Posterior vena cava (tissue), 2 donors: ENCODE measurements at regions of chr3 and their contacts with region 1.

Region 1: DNA sequence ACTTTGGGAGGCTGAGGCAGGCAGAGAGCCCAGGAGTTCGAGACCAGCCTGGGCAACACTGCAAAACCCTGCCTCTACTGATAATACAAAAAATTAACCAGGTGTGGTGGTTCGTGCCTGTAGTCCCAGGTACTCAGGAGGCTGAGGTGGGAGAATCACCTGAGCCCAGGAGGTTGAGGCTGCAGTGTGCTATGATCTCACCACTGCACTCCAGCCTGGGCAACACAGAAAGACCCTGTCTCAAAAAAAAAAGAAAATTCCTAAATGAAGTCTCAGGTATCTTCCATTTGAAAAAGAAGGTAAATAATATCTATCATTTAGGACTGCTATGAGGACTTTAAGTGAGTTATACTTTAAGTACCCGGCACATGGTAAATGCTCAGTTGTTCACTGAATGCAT is 2.9 kb downstream of the SMARCC1 start:
- DNase-seq: no peak

Region 2: DNA sequence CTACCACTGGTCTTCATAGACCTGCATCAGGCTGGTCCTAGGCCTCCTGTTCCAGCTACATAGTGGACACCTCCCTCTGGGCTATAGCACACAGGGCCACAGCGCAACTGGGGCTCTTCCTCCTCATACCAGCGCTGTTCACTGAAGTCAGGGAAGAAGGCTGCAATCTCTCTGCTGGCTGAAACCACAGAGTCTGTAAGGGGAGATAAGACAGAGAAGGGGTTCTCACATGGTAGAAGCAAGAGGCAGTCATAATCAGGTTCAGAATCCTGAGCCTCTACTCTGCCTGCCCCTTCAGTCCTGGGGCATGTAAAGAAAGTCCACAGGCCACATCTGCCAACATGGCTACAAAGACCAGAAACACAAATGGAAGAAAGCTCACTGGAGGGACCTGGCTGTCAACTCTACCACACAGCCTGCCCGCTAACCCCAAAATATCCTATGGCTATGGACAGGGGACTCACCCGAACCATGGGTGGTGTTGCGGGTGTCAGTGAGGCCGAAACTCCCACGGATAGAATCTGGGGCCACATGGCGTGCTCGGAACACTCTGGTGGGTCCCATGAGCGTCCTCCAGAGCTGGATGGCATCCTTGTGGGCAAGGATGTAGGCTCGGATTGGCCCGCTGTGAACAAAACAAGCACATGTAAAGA is 516.0 kb after region 1 on chr3:
- intact Hi-C with region 1: no loop called
- DNase-seq: no peak

Region 3: DNA sequence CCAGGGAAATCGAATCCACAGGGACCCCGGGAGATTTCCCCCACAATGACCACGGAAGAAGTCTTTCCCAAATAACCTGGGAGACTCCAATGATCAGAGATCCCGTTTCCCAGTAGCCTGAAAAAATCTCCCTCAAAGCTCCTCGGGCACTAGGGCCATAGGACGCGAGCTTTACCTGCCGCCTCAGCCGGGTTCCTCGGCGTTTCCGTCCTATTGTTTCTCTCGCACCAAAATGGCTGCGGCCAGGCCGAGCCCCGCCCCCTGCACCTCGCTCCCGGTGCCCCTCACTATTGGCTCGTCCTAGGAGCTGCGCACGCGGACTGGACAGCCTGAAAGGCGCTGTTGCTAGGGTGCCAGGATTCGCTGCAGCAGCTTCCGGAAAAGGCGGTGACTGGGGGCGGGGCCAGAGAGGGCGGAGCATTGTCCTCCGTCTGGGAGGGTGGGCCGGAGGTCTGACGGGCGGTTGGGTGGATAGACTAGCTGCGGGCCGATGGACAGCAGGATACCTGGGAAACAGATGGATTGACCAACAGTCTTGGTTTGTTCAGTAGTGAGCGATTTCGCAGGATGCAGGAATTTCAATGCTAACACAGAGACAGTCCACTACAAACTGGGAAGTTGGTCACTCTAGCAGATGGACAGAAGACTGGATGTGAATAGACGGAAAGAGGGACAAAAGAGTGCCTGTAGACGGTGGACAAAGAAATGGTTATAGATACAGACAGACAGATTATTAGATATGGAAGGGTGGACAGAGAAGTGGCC is 938.4 kb after region 1 on chr3 and contains the start of gene IP6K2:
- intact Hi-C with region 1: loop called in 1 of 2 experiments (anchors 5 kb)
- DNase-seq: peak; percentile 100
- total RNA-seq, gene IP6K2: 24.6 to 33.1 TPM